Mammary epithelial cell (primary cell): ENCODE measurements at regions of chr1 and their contacts with region 1.

Region 1: GRCh38 chr1:237953238-237953637 is 62.5 kb upstream of the ZP4 start:
- DNase-seq: peak; percentile 43
- H3K4me3 ChIP-seq: no peak overlapping the region
- H3K27ac ChIP-seq: no peak overlapping the region
- H3K4me1 ChIP-seq: no peaks in the 10 kb centered on the region
- H3K27me3 ChIP-seq: no peaks in the 10 kb centered on the region
- CTCF ChIP-seq: peak; percentile 35 to 81

Region 2: DNA sequence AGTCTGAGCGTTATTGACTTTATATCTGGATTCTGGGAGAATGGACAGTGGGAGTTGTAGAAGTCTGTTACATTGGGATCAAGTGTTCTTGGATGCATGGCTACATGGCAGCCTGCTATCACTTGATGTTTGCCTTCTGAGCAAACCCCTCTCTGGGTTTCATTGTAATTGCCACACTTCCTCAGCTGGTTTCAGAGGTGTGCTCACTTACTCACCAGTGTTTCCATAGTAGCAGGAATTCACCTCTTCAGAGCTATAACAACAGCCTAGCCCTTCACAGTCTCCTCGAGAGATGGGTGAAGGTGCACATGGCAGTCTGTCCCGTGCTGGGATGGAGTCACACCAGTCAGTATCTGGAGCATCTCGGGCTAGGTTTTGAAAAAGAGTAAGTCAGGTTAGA is 65.1 kb before region 1 on chr1:
- CTCF ChIA-PET with region 1: no interaction called
- dilution Hi-C with region 1: no loop called
- in situ Hi-C with region 1: no loop called
- intact Hi-C with region 1: no loop called
- DNase-seq: peak; percentile 90
- H3K4me3 ChIP-seq: no peak overlapping the region
- H3K27ac ChIP-seq: peak overlapping the region; percentile 45
- H3K4me1 ChIP-seq: peaks cover 30% of the 10 kb centered on the region
- H3K27me3 ChIP-seq: no peaks in the 10 kb centered on the region
- CTCF ChIP-seq: no peak

Region 3: DNA sequence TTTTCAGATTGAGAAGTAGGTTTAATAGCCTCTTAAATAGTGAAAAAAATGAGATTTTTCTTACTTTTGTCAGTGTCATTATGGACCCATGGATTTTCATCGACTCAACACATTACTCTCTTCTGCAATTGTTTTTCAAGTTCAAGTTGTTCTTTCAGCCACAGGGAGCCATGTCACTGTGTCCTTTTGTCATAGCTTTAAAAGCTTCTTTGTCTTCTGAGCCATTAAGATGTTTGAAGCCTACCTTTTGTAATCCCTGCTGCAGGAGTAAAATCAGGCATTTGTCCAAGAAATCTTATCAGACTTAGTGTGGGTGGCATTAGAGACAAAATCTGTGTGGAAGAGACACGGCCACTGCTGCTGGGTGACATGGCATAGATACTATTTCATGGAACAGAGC is 30.3 kb after region 1 on chr1:
- CTCF ChIA-PET with region 1: no interaction called
- dilution Hi-C with region 1: no loop called
- in situ Hi-C with region 1: no loop called
- intact Hi-C with region 1: no loop called
- DNase-seq: no peak
- H3K4me3 ChIP-seq: no peak overlapping the region
- H3K27ac ChIP-seq: no peak overlapping the region
- H3K4me1 ChIP-seq: no peaks in the 10 kb centered on the region
- H3K27me3 ChIP-seq: no peaks in the 10 kb centered on the region
- CTCF ChIP-seq: no peak

Region 4: GRCh38 chr1:238232084-238232710 is 279.0 kb after region 1 on chr1:
- CTCF ChIA-PET with region 1: no interaction called
- dilution Hi-C with region 1: no loop called
- in situ Hi-C with region 1: no loop called
- intact Hi-C with region 1: loop called (anchors 10 kb)
- DNase-seq: no peak
- H3K4me3 ChIP-seq: no peak overlapping the region
- H3K27ac ChIP-seq: no peak overlapping the region
- H3K4me1 ChIP-seq: no peaks in the 10 kb centered on the region
- H3K27me3 ChIP-seq: no peaks in the 10 kb centered on the region
- CTCF ChIP-seq: no peak